ENCODE measurements at regions of chr1 and their contacts with region 1.

Region 1: GRCh38 chr1:44799770-44800584 is at the start of gene PLK3:
- DNase-seq: peak; percentile 98 to 99 (median 99)
- H3K4me3 ChIP-seq: peak within 1 kb of the TSS; percentile 45 to 92 (median 54)
- H3K27ac ChIP-seq: peak within 1 kb of the TSS; percentile 80 to 97 (median 89)
- H3K4me1 ChIP-seq: peaks cover 5 to 26% of the 10 kb centered on the region in 2 donors
- H3K27me3 ChIP-seq: no peaks in the 10 kb centered on the region
- CTCF ChIP-seq: peak; percentile 81 to 92 (median 90)
- POLR2A ChIP-seq: peak; percentile 88 to 98
- total RNA-seq, gene PLK3: 4.4 to 37.5 (median 16.8) TPM

Region 2: DNA sequence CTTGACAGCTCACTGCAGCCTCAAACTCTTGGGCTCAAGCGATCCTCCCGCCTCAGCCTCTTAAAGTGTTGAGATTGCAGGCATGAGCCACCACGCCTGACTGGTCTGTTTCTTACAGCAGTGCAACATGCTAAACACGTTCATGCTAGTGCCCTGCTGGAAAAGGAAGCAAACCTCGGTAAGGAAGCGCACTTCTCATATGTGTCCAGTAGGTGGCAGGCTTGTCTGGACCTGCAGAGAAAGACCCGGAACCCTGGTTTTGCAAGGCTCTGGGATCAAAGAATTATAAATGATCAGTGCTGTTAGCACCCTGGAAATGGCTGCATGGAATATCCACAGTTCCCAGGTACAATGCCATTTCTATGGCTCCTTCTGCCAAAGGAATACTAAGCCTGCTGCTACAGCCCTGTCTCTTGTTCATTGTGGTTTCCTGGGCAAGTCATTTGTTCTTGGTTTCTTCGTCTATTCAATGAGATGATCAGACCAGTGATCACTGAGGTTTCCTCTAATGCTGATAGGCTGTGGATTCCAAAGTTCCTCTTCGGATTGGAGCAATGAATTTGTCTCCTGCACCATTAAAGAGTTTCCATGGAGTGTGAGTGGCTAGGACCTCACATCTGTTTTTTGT is 84.9 kb before region 1 on chr1:
- intact Hi-C with region 1: no loop called
- DNase-seq: peak; percentile 54 to 87 (median 72)
- H3K4me3 ChIP-seq: no peak overlapping the region
- H3K27ac ChIP-seq: no peak overlapping the region
- H3K4me1 ChIP-seq: no peaks in the 10 kb centered on the region
- H3K27me3 ChIP-seq: no peaks in the 10 kb centered on the region
- CTCF ChIP-seq: peak; percentile 72 to 96 (median 80)
- POLR2A ChIP-seq: no peak

Region 3: GRCh38 chr1:44819608-44820327 is 19.8 kb after region 1 on chr1:
- intact Hi-C with region 1: loop called in 1 of 2 experiments (anchors 2 kb)
- DNase-seq: peak; percentile 74 to 95 (median 84)
- H3K4me3 ChIP-seq: peak overlapping the region in 2 of 4 donors; percentile 27 to 56
- H3K27ac ChIP-seq: peak overlapping the region; percentile 66 to 93 (median 83)
- H3K4me1 ChIP-seq: peaks cover 8 to 17% of the 10 kb centered on the region in 2 donors
- H3K27me3 ChIP-seq: no peaks in the 10 kb centered on the region
- CTCF ChIP-seq: peak in 1 of 6 experiments; percentile 5
- POLR2A ChIP-seq: peak; percentile 92 to 98

Region 4: DNA sequence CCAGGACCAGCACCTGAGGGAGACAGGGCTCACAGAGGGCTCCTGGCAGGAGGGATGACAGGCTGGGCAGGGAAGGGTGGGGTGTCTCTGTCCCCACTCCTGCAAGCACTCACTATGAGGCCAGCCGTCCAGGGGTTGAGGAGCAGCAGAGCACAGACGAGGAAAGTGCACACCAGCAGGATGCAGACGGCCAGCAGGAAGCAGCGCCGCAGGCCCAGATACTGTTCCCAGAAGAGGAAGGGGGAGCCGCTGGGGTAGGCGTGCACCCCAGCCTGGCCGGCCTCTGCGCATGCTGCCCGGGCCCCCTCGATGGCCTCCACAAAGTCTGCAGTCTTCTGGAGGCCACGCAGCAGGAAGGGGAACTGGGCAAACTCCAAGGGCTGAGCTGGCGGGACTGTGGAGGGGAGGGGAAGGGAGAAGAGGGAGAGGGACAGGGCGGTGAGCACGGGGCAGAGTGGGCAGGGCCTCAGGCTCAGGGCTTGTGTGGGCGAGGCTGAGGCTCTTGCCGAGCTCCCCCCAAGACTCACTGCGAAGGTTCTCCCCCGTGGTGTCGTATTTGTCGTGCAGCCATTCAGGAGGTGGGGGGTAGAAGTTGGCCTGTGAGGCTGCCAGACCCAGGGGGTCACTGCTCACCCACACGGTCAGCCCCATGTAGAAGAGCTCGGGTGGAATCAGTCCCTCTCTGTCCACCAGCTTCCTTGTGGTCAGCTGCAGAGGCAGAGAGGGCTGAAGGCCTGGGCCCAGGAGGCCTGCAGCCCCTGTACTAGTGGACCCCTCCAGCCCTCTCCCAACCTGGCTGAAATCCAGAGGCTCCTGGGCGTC is 26.6 kb after region 1 on chr1:
- intact Hi-C with region 1: loop called in 1 of 2 experiments (anchors 5 kb)
- DNase-seq: peak in 5 of 7 donors; percentile 54 to 68 (median 61)
- H3K4me3 ChIP-seq: no peak overlapping the region
- H3K27ac ChIP-seq: peak overlapping the region in 2 of 5 donors; percentile 44 to 66
- H3K4me1 ChIP-seq: no peaks in the 10 kb centered on the region
- H3K27me3 ChIP-seq: no peaks in the 10 kb centered on the region
- CTCF ChIP-seq: no peak
- POLR2A ChIP-seq: no peak

Measured in adrenal gland (tissue), 19 donors.